Activated naive CD4-positive, alpha-beta T cell treated with anti-CD3 and anti-CD28 coated beads for 36 hours (primary cell): ENCODE measurements at regions of chr3 and their contacts with region 1.

Region 1: DNA sequence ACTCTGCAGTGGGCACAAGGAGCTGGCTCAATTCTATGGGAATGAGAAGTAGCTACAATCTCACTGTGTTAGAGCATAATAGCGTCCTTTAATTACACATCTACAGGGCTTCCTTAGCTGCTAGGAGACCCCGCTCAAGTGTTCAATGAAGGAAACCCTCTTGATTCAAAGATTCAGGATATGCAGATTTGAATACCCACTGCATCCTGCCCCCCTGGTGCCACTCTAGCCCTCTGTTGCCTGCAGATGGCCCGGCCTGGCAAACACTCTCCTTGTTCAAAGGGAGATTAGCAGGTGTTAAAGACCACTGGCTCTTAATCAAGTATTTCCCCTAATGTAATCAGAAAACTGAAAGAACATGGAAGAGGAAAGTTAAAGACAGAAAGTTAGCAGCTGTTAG is 356.6 kb downstream of the VGLL3 start:
- DNase-seq: no peak
- H3K4me3 Mint-ChIP-seq: no peak overlapping the region
- H3K27ac Mint-ChIP-seq: no peak overlapping the region
- H3K4me1 Mint-ChIP-seq: no peaks in the 10 kb centered on the region
- H3K27me3 Mint-ChIP-seq: no peaks in the 10 kb centered on the region

Region 2: DNA sequence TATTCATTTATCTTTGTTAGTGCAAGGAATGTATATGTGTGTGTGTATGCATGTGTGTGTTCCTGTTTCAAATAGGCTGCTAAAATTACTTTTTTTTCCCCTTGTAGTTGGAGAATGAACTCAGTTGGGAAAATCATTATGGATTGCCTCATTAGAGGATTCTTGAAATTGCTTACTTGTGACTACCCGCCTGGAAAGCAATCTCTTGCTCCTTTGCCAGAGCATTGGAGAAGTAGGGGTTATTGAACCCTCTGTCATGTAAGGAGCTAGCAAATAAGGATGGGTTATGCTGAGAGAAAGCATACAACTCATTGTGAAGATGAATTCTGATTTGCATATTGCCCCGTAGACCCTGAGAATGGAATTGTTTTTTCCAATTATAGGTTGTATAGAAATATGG is 1201.0 kb before region 1 on chr3:
- CTCF ChIA-PET with region 1: no interaction called
- intact Hi-C with region 1: loop called (anchors 5 kb)
- DNase-seq: no peak
- H3K4me3 Mint-ChIP-seq: no peak overlapping the region
- H3K27ac Mint-ChIP-seq: no peak overlapping the region
- H3K4me1 Mint-ChIP-seq: no peaks in the 10 kb centered on the region
- H3K27me3 Mint-ChIP-seq: no peaks in the 10 kb centered on the region

Region 3: DNA sequence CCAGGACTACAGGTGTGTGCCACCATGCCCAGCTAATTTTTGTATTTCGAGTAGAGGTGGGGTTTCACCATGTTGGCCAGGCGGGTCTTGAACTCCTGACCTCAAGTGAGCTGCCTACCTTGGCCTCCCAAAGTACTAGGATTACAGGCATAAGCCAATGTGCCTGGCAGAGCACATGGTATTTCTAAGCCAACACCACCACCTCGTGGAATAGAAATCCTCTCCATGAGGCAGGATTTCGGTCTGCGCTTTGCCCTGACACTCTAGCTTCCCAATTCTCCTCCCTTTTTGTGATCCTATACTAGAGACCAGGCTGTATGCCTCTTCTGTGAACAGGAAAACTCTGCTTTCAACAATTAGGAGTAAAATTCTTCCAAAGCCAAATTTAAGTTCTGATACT is 15.7 kb before region 1 on chr3:
- CTCF ChIA-PET with region 1: no interaction called
- intact Hi-C with region 1: no loop called
- DNase-seq: no peak
- H3K4me3 Mint-ChIP-seq: no peak overlapping the region
- H3K27ac Mint-ChIP-seq: no peak overlapping the region
- H3K4me1 Mint-ChIP-seq: no peaks in the 10 kb centered on the region
- H3K27me3 Mint-ChIP-seq: no peaks in the 10 kb centered on the region